CD4-positive, alpha-beta T cell (primary cell): ENCODE measurements at regions of chr10 and their contacts with region 1.

Region 1: GRCh38 chr10:101042667-101043355 is 11.8 kb downstream of the SFXN3 start:
- DNase-seq: peak; percentile 58 to 93 (median 77)
- ATAC-seq: peak; percentile 74
- H3K4me3 ChIP-seq: peak overlapping the region; percentile 66
- H3K4me3 Mint-ChIP-seq: peak overlapping the region; percentile 95
- H3K27ac ChIP-seq: peak overlapping the region in 1 of 2 donors; percentile 39
- H3K27ac Mint-ChIP-seq: peak overlapping the region; percentile 76
- H3K4me1 ChIP-seq: peaks cover 24% of the 10 kb centered on the region
- H3K4me1 Mint-ChIP-seq: peaks cover 26% of the 10 kb centered on the region
- H3K27me3 ChIP-seq: peaks cover 10 to 15% of the 10 kb centered on the region in 2 experiments
- H3K27me3 Mint-ChIP-seq: peaks cover 17% of the 10 kb centered on the region
- CTCF ChIP-seq: no peak

Region 2: GRCh38 chr10:100286051-100287033 is 756.5 kb before region 1 on chr10 and contains the start of gene BLOC1S2:
- CTCF ChIA-PET with region 1: no interaction called
- POLR2A ChIA-PET with region 1: no interaction called
- intact Hi-C with region 1: loop called in 1 of 2 experiments (anchors 10 kb)
- DNase-seq: peak; percentile 70 to 92 (median 82)
- ATAC-seq: peak; percentile 81
- H3K4me3 ChIP-seq: peak within 1 kb of the TSS; percentile 96
- H3K4me3 Mint-ChIP-seq: peak within 1 kb of the TSS; percentile 98
- H3K27ac ChIP-seq: peak within 1 kb of the TSS; percentile 85 to 92
- H3K27ac Mint-ChIP-seq: peak within 1 kb of the TSS; percentile 97
- H3K4me1 ChIP-seq: peaks cover 22% of the 10 kb centered on the region
- H3K4me1 Mint-ChIP-seq: peaks cover 30% of the 10 kb centered on the region
- H3K27me3 ChIP-seq: no peaks in the 10 kb centered on the region
- H3K27me3 Mint-ChIP-seq: no peaks in the 10 kb centered on the region
- CTCF ChIP-seq: no peak
- total RNA-seq, gene BLOC1S2: 49.4 to 55.9 TPM

Region 3: GRCh38 chr10:101018600-101019439 is 24.0 kb before region 1 on chr10:
- CTCF ChIA-PET with region 1: interaction called, 14 read pairs
- POLR2A ChIA-PET with region 1: no interaction called
- intact Hi-C with region 1: no loop called
- DNase-seq: peak; percentile 47 to 82 (median 67)
- ATAC-seq: peak; percentile 79
- H3K4me3 ChIP-seq: no peak overlapping the region
- H3K4me3 Mint-ChIP-seq: no peak overlapping the region
- H3K27ac ChIP-seq: no peak overlapping the region
- H3K27ac Mint-ChIP-seq: no peak overlapping the region
- H3K4me1 ChIP-seq: peaks cover 20% of the 10 kb centered on the region
- H3K4me1 Mint-ChIP-seq: peaks cover 11% of the 10 kb centered on the region
- H3K27me3 ChIP-seq: peaks cover 36 to 39% of the 10 kb centered on the region in 2 experiments
- H3K27me3 Mint-ChIP-seq: peaks cover 70% of the 10 kb centered on the region
- CTCF ChIP-seq: peak; percentile 60

Region 4: DNA sequence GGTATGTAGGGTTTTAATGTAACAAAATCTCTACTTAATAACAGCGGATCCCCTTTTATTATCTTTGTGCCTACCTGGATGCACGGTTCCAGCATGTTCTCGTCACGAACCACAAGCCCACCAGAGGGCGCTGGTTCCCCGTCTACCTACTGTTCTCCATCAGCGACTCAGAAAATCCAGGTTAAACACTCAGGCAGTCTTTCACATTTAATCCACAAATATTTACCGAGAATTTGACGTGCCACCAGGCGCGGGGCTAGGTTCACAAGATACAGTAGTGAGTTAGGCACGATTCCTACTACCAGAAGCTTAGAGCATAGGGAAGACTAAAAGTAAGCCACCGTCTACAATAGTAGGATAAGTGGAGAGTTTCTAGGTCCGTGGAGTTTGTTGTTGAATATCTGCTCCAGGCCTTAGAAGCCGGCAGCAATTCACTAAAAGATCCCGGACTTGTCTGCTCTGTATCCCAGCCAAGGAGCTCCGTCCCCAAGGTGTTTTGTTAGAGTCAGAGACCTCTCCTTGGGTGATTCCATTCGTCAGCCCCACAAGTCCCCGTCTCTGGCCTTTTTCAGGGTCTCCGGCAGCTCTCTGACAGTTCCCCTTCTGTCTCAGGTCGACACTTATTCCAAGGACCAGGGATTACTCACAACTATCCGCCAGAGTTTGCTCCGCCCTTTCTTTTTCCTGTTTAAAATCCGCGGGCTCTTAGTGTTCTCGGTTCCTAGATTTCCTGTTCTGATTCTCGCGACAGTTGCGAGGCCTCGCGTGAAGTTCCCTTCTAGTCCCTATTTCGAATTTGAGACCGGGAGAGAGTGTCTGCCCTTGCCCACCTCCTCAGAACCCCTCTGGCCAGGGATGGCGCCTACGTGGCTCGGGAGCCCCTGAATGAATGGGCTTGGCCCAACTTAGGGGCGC is 17.5 kb after region 1 on chr10:
- CTCF ChIA-PET with region 1: interaction called, 9 read pairs
- POLR2A ChIA-PET with region 1: interaction called, 24 read pairs
- intact Hi-C with region 1: loop called in 1 of 2 experiments (anchors 2 kb)
- DNase-seq: peak; percentile 79 to 95 (median 90)
- ATAC-seq: peak; percentile 70
- H3K4me3 ChIP-seq: peak overlapping the region; percentile 85
- H3K4me3 Mint-ChIP-seq: peak overlapping the region; percentile 95
- H3K27ac ChIP-seq: peak overlapping the region; percentile 88 to 91
- H3K27ac Mint-ChIP-seq: peak overlapping the region; percentile 81
- H3K4me1 ChIP-seq: peaks cover 40% of the 10 kb centered on the region
- H3K4me1 Mint-ChIP-seq: peaks cover 31% of the 10 kb centered on the region
- H3K27me3 ChIP-seq: peaks cover 27% of the 10 kb centered on the region in 2 experiments
- H3K27me3 Mint-ChIP-seq: peaks cover 20% of the 10 kb centered on the region
- CTCF ChIP-seq: peak; percentile 98

Region 5: DNA sequence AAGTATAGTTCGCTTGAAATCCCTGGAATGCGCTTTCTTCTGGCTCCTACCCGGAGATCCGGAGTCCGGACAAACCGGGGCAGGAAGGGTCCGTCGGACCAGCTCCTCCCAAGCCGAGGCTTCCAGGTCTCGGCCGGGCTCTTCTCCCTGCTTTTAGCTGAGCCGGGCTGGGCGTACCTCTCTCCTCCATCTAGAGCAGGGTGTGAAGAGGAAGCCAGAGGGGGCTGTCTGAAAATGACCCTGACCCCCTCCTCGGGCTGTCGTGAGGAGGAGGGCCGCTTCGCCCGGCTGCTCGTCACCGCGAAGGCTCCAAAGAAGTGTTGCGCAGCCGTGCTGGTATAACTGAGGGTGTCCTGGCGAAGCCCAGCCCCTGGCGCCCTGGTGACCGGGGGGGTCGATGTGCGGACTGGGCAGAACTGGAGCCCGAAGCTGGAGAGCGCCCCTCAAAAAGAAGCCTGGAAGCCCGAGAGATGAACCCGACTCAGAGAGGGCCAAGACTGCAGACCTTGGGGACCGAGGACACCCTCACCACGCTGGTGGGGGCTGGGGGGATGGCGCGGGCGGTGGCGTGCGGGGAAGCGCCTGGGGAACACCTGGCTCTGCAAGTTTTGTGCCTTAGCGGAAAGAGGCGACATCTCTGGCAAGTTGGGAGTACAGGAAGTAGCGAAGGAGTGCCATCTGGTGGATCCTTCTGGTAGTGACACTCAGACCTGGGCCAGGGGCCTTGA is 24.7 kb after region 1 on chr10:
- CTCF ChIA-PET with region 1: interaction called, 30 read pairs
- POLR2A ChIA-PET with region 1: interaction called, 24 read pairs
- intact Hi-C with region 1: loop called (anchors 1 kb)
- DNase-seq: peak; percentile 61 to 88 (median 69)
- ATAC-seq: peak; percentile 83
- H3K4me3 ChIP-seq: peak overlapping the region; percentile 70
- H3K4me3 Mint-ChIP-seq: peak overlapping the region; percentile 93
- H3K27ac ChIP-seq: no peak overlapping the region
- H3K27ac Mint-ChIP-seq: no peak overlapping the region
- H3K4me1 ChIP-seq: peaks cover 34% of the 10 kb centered on the region
- H3K4me1 Mint-ChIP-seq: peaks cover 30% of the 10 kb centered on the region
- H3K27me3 ChIP-seq: peaks cover 52 to 59% of the 10 kb centered on the region in 2 experiments
- H3K27me3 Mint-ChIP-seq: peaks cover 63% of the 10 kb centered on the region
- CTCF ChIP-seq: peak; percentile 96